HepG2 (cell line): ENCODE measurements at regions of chr17 and their contacts with region 1.

Region 1: GRCh38 chr17:72120642-72121163 is at the start of gene SOX9:
- DNase-seq: peak; percentile 98
- ATAC-seq: peak; percentile 90
- H3K4me3 ChIP-seq: peak within 1 kb of the TSS; percentile 86 to 100 (median 99)
- H3K27ac ChIP-seq: peak within 1 kb of the TSS; percentile 79
- H3K4me1 ChIP-seq: peaks cover 45% of the 10 kb centered on the region
- H3K27me3 ChIP-seq: no peaks in the 10 kb centered on the region; a peak in 1 of 5 replicates
- CTCF ChIP-seq: no peak
- EP300 ChIP-seq: no peak
- POLR2A ChIP-seq: peak; percentile 96 to 99
- RAD21 ChIP-seq: no peak; the same call in none of the 2 replicates
- total RNA-seq, gene SOX9: 27.6 and 40.1 TPM in 2 replicates

Region 2: GRCh38 chr17:71677439-71677838 is 443.3 kb before region 1 on chr17:
- CTCF ChIA-PET with region 1: no interaction called
- POLR2A ChIA-PET with region 1: interaction called, 20 read pairs
- in situ Hi-C with region 1: no loop called
- intact Hi-C with region 1: loop called (anchors 10 kb)
- DNase-seq: no peak
- ATAC-seq: no peak
- H3K4me3 ChIP-seq: no peak overlapping the region
- H3K27ac ChIP-seq: no peak overlapping the region
- H3K4me1 ChIP-seq: peaks cover 29% of the 10 kb centered on the region
- H3K27me3 ChIP-seq: no peaks in the 10 kb centered on the region
- CTCF ChIP-seq: no peak
- EP300 ChIP-seq: no peak
- POLR2A ChIP-seq: no peak
- RAD21 ChIP-seq: no peak

Region 3: DNA sequence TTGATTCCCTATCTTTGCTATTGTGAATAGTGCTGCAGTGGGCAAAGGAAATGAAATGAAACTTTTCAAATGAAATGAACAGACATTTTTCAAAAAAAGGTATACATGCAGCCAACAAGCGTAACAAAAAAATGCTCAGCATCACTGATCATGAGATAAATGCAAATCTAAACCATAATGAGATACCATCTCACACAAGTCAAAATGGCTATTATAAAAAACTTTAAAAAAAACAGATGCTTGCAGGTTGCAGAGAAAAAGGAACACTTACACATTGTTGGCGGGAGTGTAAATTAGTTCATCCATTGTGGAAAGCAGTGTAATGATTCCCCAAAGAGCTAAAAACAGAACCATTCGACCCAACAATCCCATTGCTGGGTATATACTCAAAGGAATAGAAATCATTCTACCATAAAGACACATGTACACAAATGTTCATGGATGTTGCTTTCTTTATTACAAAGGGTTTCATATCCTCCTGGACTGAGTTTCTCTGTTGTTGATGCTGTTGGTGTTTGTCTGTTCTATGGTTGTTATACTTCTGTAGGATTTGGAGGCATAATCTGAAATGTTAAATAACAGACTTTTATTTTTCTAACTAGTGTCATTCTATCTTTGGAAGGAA is 99.2 kb before region 1 on chr17:
- CTCF ChIA-PET with region 1: no interaction called
- POLR2A ChIA-PET with region 1: no interaction called
- in situ Hi-C with region 1: no loop called
- intact Hi-C with region 1: no loop called
- DNase-seq: no peak
- ATAC-seq: no peak
- H3K4me3 ChIP-seq: no peak overlapping the region
- H3K27ac ChIP-seq: no peak overlapping the region
- H3K4me1 ChIP-seq: no peaks in the 10 kb centered on the region
- H3K27me3 ChIP-seq: peaks cover 0 to 29% of the 10 kb centered on the region in 2 experiments; a peak in 3 of 5 replicates
- CTCF ChIP-seq: no peak
- EP300 ChIP-seq: no peak
- POLR2A ChIP-seq: no peak
- RAD21 ChIP-seq: no peak

Region 4: DNA sequence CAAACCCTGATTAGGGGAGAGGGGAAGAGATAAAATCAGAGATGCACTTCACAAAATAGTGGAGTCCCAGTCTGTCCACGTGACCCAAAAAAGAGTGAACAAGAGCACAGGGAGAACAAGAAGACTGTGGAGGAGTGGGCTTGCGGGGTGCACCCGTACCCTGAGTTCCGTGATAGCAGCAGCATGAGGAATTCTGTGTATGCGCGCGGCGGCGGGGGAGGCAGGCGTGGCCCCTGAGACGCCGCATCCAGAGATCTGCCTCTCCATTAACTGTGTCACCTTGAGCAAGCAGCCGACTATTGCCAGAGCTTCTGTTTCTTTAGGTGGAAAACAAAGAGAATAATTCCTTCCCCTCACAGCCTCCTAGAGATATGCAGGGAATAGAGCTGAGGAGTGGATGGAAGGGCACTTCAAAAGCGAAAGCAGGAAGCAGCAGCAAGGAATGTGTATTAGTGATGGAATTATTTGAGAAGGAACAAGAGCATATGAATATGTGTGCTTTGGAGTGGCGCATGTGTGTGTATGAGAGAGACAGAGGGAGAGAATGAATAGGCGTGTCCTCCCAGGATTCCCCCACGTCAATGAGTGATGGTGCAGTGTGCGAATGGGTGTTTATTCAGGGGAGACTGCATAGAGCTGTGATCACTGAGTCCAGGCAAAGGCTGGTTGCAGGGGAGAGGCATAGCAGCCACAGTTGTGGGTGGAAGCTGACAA is 10.3 kb before region 1 on chr17:
- CTCF ChIA-PET with region 1: no interaction called
- POLR2A ChIA-PET with region 1: interaction called, 13 read pairs
- in situ Hi-C with region 1: no loop called
- intact Hi-C with region 1: no loop called
- DNase-seq: no peak
- ATAC-seq: no peak
- H3K4me3 ChIP-seq: no peak overlapping the region
- H3K27ac ChIP-seq: no peak overlapping the region
- H3K4me1 ChIP-seq: peaks cover 44% of the 10 kb centered on the region
- H3K27me3 ChIP-seq: no peaks in the 10 kb centered on the region
- CTCF ChIP-seq: no peak
- EP300 ChIP-seq: no peak
- POLR2A ChIP-seq: no peak
- RAD21 ChIP-seq: no peak

Region 5: GRCh38 chr17:72236915-72237633 is 116.4 kb after region 1 on chr17:
- CTCF ChIA-PET with region 1: no interaction called
- POLR2A ChIA-PET with region 1: no interaction called
- in situ Hi-C with region 1: no loop called
- intact Hi-C with region 1: no loop called
- DNase-seq: no peak
- ATAC-seq: peak; percentile 41; the same call in 2 of the 3 replicates
- H3K4me3 ChIP-seq: no peak overlapping the region
- H3K27ac ChIP-seq: no peak overlapping the region
- H3K4me1 ChIP-seq: peaks cover 18% of the 10 kb centered on the region
- H3K27me3 ChIP-seq: peaks cover 4 to 26% of the 10 kb centered on the region in 2 experiments; a peak in 4 of 5 replicates
- CTCF ChIP-seq: no peak
- EP300 ChIP-seq: no peak
- POLR2A ChIP-seq: no peak
- RAD21 ChIP-seq: no peak

Region 6: GRCh38 chr17:72397687-72398086 is 277.0 kb after region 1 on chr17:
- CTCF ChIA-PET with region 1: no interaction called
- POLR2A ChIA-PET with region 1: interaction called, 96 read pairs
- in situ Hi-C with region 1: loop called (anchors 5 kb)
- intact Hi-C with region 1: loop called (anchors 1 kb)
- DNase-seq: no peak
- ATAC-seq: no peak
- H3K4me3 ChIP-seq: no peak overlapping the region
- H3K27ac ChIP-seq: peak overlapping the region; percentile 41
- H3K4me1 ChIP-seq: peaks cover 98% of the 10 kb centered on the region
- H3K27me3 ChIP-seq: no peaks in the 10 kb centered on the region
- CTCF ChIP-seq: no peak
- EP300 ChIP-seq: no peak
- POLR2A ChIP-seq: no peak
- RAD21 ChIP-seq: no peak

Region 7: GRCh38 chr17:72430611-72431432 is 310.1 kb after region 1 on chr17:
- CTCF ChIA-PET with region 1: no interaction called
- POLR2A ChIA-PET with region 1: interaction called, 11 read pairs
- in situ Hi-C with region 1: no loop called
- intact Hi-C with region 1: no loop called
- DNase-seq: no peak
- ATAC-seq: peak; percentile 20; the same call in 2 of the 3 replicates
- H3K4me3 ChIP-seq: no peak overlapping the region
- H3K27ac ChIP-seq: no peak overlapping the region
- H3K4me1 ChIP-seq: peaks cover 96% of the 10 kb centered on the region
- H3K27me3 ChIP-seq: no peaks in the 10 kb centered on the region
- CTCF ChIP-seq: peak; percentile 55
- EP300 ChIP-seq: no peak
- POLR2A ChIP-seq: no peak
- RAD21 ChIP-seq: no peak; the same call in 1 of the 2 replicates

Region 8: DNA sequence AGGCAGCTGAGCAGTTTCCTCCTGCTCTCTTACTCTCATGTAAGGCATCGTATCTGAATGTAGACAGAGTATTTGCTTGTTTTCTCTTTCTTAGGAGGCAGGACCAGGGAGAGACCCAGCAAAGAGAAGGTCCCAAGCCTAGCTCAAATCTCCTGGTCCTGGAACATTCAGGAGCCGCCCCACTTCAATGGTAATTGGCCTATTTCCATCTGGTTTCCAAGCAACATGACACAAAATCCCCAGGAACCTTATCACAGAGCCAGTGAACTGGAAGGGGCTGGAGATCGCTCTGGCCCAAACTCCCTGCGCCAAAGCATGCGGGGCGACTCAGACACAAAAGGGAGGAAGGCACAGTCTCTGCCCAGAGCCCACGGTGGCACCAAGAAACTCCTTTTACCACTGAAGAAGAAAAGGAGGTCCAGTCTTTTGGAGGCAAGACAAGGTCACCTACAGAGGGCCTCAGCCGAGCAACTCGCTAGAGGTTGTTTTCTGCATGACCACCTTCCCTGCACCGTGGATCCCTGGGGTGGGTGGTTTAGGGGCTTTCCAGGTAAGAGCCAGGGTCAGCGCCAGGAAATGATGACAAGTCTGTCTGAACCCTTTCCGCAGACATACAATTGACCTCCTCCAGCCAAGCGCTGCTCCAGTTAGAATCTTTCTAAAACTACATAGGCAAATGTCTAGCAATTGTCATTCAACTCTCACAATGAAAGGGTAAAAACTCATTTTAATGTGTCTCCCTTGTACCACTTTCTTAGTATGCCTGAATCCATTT is 394.8 kb after region 1 on chr17:
- CTCF ChIA-PET with region 1: no interaction called
- POLR2A ChIA-PET with region 1: interaction called, 23 read pairs
- in situ Hi-C with region 1: loop called (anchors 5 kb)
- intact Hi-C with region 1: no loop called
- DNase-seq: no peak
- ATAC-seq: no peak
- H3K4me3 ChIP-seq: no peak overlapping the region
- H3K27ac ChIP-seq: no peak overlapping the region
- H3K4me1 ChIP-seq: peaks cover 87% of the 10 kb centered on the region
- H3K27me3 ChIP-seq: no peaks in the 10 kb centered on the region
- CTCF ChIP-seq: no peak
- EP300 ChIP-seq: no peak
- POLR2A ChIP-seq: no peak
- RAD21 ChIP-seq: no peak